HepG2 (cell line): ENCODE measurements at regions of chr14 and their contacts with region 1.

Region 1: GRCh38 chr14:62179367-62180018 is 417.3 kb downstream of the SNAPC1 start:
- DNase-seq: peak; percentile 48
- ATAC-seq: peak; percentile 84
- H3K4me3 ChIP-seq: no peak overlapping the region
- H3K27ac ChIP-seq: no peak overlapping the region
- H3K4me1 ChIP-seq: no peaks in the 10 kb centered on the region
- H3K27me3 ChIP-seq: no peaks in the 10 kb centered on the region
- CTCF ChIP-seq: peak; percentile 81
- EP300 ChIP-seq: no peak
- POLR2A ChIP-seq: no peak
- RAD21 ChIP-seq: 0 out of 2 replicates have a peak, but pooled peaks have one; percentile 45

Region 2: GRCh38 chr14:63039800-63040380 is 860.4 kb after region 1 on chr14:
- CTCF ChIA-PET with region 1: interaction called, 15 read pairs
- POLR2A ChIA-PET with region 1: no interaction called
- in situ Hi-C with region 1: loop called (anchors 5 kb)
- intact Hi-C with region 1: no loop called
- DNase-seq: peak; percentile 31
- ATAC-seq: peak; percentile 80
- H3K4me3 ChIP-seq: no peak overlapping the region
- H3K27ac ChIP-seq: no peak overlapping the region
- H3K4me1 ChIP-seq: no peaks in the 10 kb centered on the region
- H3K27me3 ChIP-seq: peaks cover 2 to 8% of the 10 kb centered on the region in 2 experiments; a peak in 2 of 5 replicates
- CTCF ChIP-seq: peak; percentile 57
- EP300 ChIP-seq: no peak
- POLR2A ChIP-seq: no peak
- RAD21 ChIP-seq: no peak

Region 3: DNA sequence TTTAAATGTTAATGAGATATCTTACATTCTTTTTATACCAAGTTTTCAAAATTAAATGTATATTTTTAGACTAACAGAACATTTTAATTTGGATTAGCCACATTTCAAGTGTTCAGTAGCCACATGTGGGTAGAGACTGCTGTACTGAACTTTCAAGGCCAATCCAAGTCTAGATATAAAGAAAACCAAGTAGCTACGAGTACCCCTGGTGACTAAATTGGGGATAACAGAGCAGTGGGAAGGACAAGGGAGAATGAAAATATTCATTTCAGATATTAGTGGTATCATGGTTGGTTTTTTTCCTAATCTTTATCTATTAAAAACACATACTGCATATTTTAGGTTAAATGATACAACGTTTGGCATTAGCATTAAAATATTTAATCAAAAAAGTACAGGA is 955.3 kb after region 1 on chr14:
- CTCF ChIA-PET with region 1: no interaction called
- POLR2A ChIA-PET with region 1: no interaction called
- in situ Hi-C with region 1: no loop called
- intact Hi-C with region 1: loop called (anchors 5 kb)
- DNase-seq: no peak
- ATAC-seq: peak; percentile 44; the same call in 2 of the 3 replicates
- H3K4me3 ChIP-seq: no peak overlapping the region
- H3K27ac ChIP-seq: no peak overlapping the region
- H3K4me1 ChIP-seq: no peaks in the 10 kb centered on the region
- H3K27me3 ChIP-seq: no peaks in the 10 kb centered on the region
- CTCF ChIP-seq: 0 out of 2 replicates have a peak, but pooled peaks have one; percentile 20
- EP300 ChIP-seq: no peak
- POLR2A ChIP-seq: no peak
- RAD21 ChIP-seq: no peak

Region 4: DNA sequence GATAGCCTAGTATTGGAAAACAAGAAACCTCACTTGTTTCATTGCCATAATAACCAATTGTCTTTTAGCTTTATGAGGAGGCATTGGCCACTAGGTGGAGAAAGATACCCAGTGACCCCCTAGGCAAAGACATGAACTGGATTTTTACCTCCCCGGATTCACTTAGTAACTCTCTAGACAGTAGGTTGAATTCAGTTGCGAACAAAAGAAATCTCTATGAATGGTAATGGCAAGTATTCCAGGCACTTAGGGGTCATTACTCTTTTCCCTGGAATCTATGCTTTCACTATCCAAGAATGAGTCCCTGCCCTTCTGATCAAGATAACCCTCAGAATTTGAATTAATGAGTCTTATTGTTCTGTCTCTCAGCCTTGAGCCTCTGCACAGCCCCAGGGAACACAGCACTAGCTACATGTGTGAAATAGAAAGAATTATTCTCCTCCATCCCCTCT is 995.3 kb after region 1 on chr14:
- CTCF ChIA-PET with region 1: no interaction called
- POLR2A ChIA-PET with region 1: no interaction called
- in situ Hi-C with region 1: loop called (anchors 25 kb)
- intact Hi-C with region 1: no loop called
- DNase-seq: peak; percentile 45
- ATAC-seq: peak; percentile 66
- H3K4me3 ChIP-seq: no peak overlapping the region
- H3K27ac ChIP-seq: no peak overlapping the region
- H3K4me1 ChIP-seq: no peaks in the 10 kb centered on the region
- H3K27me3 ChIP-seq: no peaks in the 10 kb centered on the region
- CTCF ChIP-seq: peak; percentile 67
- EP300 ChIP-seq: no peak
- POLR2A ChIP-seq: no peak
- RAD21 ChIP-seq: no peak

Region 5: DNA sequence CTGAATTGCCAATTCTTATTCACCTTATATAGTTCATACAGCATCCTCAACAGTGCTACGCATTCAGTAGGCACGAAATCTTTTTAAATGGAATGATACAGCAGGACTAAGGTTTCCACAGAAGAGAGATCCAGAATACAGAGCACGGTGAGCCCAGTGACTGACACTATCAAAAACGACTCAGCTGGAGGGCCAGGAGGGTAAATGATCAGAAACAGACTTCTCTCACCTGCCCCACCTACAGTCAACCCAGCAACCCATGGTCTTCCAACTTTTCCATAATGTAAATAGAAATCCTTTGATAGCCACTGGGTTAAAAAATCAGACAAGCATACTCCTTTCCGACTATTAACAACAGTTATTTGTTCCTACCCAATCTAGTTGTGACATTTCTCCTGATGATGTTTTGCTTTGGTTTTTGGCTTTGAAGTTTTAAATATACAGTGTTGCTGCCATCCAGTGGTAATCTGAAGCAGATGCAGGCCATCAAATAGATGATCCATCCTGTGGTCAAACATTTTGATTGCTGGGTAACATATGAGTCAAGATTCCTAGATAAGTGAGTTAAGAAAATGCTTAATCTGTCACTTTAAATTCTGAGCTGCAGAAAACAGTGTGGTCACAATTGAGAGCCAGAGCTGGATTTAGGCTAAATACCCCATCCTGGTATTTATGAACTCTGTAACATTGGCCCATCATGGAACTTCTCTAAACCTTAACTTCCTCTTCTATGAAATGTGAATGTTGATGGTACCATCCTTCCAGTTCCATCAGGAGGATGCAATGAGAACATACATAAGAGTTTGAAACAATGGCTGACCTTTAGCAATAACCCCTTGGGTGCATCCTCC is 1097.2 kb after region 1 on chr14:
- CTCF ChIA-PET with region 1: interaction called, 18 read pairs
- POLR2A ChIA-PET with region 1: no interaction called
- in situ Hi-C with region 1: no loop called
- intact Hi-C with region 1: no loop called
- DNase-seq: peak; percentile 17
- ATAC-seq: peak; percentile 62
- H3K4me3 ChIP-seq: no peak overlapping the region
- H3K27ac ChIP-seq: no peak overlapping the region
- H3K4me1 ChIP-seq: no peaks in the 10 kb centered on the region
- H3K27me3 ChIP-seq: no peaks in the 10 kb centered on the region; a peak in 1 of 5 replicates
- CTCF ChIP-seq: peak; percentile 76
- EP300 ChIP-seq: no peak
- POLR2A ChIP-seq: no peak
- RAD21 ChIP-seq: peak; percentile 71